ENCODE measurements at regions of chr17 and their contacts with region 1.

Region 1: DNA sequence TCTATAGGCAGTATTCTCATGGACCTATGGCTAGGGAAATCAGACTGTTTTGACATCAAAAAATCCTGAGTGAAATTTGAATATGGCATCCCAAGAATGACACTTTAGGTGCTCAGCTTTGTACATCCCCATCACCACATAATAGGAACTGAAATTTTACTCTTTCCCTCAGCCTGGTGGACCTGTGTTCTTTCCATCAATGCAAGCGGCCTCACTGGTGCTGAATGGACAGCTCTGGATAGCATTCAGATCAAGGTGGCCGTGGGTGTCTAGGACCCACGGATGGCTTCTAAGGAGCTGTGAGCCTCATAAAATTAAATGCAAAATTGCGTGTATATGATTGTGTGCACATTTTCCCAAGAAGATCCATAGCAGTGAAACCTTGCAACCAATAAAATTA is 152.6 kb downstream of the MAP2K6 start:
- DNase-seq: no peak
- H3K4me3 ChIP-seq: no peak overlapping the region
- H3K27ac ChIP-seq: no peak overlapping the region
- H3K4me1 ChIP-seq: no peaks in the 10 kb centered on the region
- H3K27me3 ChIP-seq: no peaks in the 10 kb centered on the region
- CTCF ChIP-seq: no peak

Region 2: DNA sequence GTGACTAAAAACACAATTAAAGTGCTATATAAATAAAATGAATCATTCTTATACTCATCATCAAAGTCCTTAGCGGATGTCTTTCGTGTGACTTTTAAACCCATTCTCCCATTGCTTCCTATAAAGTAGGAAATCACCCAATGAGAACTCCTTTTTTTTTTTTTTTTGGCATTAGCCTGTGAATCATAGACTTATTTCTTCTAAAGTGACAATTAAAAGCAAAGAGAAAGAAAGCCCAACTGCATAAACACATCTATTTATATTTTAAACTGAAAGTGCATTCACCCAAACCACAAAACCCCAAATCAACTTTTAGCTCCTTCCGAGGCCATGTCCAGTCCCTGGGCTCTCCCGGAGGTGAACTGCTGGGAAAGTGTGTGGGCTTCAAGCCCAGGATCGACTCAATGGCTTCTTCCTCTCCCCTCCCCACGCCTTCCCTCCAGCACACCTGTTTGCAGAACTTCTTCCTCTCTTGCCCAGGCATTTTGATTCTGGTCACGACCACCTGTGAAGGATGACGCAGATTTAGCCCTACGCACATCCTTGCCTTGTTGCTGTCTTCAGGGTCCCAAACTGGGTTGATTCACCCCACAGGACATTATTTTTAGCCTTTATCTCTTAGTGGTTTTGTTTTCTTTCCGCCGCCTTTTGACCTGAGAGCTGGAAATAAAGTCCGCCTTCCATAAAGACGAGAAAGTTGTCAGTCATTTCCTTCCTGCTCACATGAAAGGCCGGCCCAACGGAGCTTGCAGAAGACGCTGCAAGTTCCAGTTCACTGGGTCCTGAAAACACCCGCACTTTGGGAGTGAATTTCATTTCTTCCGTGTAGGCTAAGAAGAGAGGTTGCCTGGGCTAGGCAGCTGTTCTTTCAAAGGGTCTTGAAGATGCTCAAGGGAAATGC is 14.2 kb after region 1 on chr17:
- intact Hi-C with region 1: no loop called
- DNase-seq: no peak
- H3K4me3 ChIP-seq: no peak overlapping the region
- H3K27ac ChIP-seq: no peak overlapping the region
- H3K4me1 ChIP-seq: no peaks in the 10 kb centered on the region
- H3K27me3 ChIP-seq: no peaks in the 10 kb centered on the region
- CTCF ChIP-seq: no peak

Region 3: GRCh38 chr17:70060415-70060814 is 493.3 kb after region 1 on chr17:
- intact Hi-C with region 1: loop called (anchors 10 kb)
- DNase-seq: no peak
- H3K4me3 ChIP-seq: no peak overlapping the region
- H3K27ac ChIP-seq: no peak overlapping the region
- H3K4me1 ChIP-seq: no peaks in the 10 kb centered on the region
- H3K27me3 ChIP-seq: no peaks in the 10 kb centered on the region
- CTCF ChIP-seq: no peak

Measured in ascending aorta (tissue), 2 donors.